ENCODE measurements at regions of chr17 and their contacts with region 1.

Region 1: GRCh38 chr17:48878918-48879898 is 13.4 kb upstream of the ATP5MC1 start:
- DNase-seq: no peak
- H3K4me3 ChIP-seq: no peak overlapping the region
- H3K27me3 ChIP-seq: no peaks in the 10 kb centered on the region
- CTCF ChIP-seq: peak; percentile 95

Region 2: GRCh38 chr17:48671697-48672171 is 207.5 kb before region 1 on chr17:
- CTCF ChIA-PET with region 1: interaction called, 87 read pairs
- POLR2A ChIA-PET with region 1: no interaction called
- DNase-seq: peak; percentile 13
- H3K4me3 ChIP-seq: peak overlapping the region; percentile 28
- H3K27me3 ChIP-seq: peaks cover 7% of the 10 kb centered on the region; the same call in 1 of the 2 replicates
- CTCF ChIP-seq: peak; percentile 92

Region 3: DNA sequence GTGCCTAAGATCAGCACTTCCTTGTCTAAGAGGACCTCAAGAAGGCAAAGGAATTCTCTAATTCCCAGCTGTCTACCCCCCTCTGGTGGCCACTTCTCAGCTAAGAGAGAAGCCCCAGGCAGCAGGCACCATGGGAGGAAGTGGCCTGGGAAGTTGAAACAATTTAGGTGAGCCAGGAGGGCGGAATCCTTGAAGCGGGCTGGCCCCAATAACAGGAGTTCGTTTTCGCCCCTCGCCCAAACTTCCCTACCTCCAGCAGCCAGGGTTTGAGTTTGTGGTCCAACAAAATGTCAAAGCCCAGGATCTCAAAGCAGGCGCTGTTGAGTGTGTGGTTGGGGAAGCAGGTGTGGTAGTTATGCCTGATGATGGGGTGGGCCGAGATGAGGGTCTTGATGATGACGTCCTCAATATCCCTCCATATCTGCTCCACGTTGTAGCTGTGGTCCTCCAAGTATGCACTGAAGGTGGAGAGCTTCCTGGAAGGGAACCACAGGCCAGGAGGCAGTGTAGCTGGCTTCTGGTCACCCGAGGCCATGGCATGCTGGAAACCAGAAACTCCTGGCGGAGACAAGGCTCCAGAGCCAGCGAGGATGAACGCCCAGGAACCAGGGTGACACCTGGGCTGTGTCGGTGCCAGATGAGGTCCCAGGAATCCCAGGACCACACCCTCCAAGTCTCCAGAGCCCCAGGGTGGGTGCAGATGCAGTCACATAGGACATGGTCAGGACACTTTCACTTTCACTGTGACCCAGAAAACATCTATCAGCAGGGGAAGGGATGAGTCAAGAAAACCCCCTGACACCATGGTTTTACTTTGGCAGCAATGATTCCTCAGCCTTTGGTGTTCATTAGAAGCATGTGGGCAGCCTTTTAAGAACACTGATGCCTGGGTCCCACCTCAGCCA is 87.8 kb before region 1 on chr17:
- CTCF ChIA-PET with region 1: interaction called, 34 read pairs
- POLR2A ChIA-PET with region 1: interaction called, 13 read pairs
- DNase-seq: peak; percentile 35
- H3K4me3 ChIP-seq: no peak overlapping the region
- H3K27me3 ChIP-seq: peaks cover 13% of the 10 kb centered on the region
- CTCF ChIP-seq: peak; percentile 89

Region 4: DNA sequence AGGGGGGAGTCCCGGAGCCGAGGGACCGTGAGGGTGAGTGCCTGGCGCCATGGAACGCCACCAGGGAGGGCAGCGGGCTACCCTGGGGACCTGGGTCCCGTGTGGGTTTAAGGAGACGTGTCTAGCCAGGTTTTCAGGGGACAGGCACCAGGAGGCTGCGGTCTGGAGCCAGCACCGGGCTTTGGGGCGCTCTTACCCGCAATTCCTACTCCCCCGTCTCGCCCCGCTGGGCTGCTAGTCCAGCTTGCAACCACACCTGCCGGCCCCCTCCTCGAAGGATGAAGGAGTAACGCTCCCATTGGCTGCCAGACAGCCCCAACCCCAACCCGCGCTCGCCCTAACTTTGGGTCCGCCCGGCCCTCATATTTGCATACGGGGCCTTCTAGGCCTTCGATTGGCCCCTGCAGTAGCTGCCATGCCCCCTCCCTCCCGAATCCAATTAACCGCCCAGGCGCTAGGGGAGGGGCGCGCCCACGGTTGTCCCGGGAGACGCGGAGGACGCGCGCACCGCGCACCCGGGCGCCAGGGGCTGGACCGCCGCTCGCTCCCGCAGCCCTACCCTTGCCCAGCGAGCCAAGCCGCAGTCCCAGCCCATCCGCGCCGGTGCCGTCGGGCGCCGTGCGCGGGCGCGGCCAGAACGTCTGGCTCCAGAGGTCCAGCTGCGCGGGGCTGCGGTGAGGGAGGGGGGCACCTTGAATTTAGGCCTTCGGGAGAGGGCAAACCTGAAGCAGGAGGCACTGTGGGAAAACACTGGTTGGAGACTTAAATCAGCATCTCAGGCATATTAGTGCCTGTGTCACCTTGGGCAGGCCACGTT is 62.2 kb before region 1 on chr17 and contains the start of gene TTLL6:
- CTCF ChIA-PET with region 1: interaction called, 719 read pairs
- POLR2A ChIA-PET with region 1: interaction called, 4 read pairs
- DNase-seq: no peak
- H3K4me3 ChIP-seq: peak within 1 kb of the TSS; percentile 37
- H3K27me3 ChIP-seq: peaks cover 12% of the 10 kb centered on the region
- CTCF ChIP-seq: no peak
- polyA plus RNA-seq, gene TTLL6: 0.02 TPM in 1 of 2 replicates, not detected in the other

Region 5: DNA sequence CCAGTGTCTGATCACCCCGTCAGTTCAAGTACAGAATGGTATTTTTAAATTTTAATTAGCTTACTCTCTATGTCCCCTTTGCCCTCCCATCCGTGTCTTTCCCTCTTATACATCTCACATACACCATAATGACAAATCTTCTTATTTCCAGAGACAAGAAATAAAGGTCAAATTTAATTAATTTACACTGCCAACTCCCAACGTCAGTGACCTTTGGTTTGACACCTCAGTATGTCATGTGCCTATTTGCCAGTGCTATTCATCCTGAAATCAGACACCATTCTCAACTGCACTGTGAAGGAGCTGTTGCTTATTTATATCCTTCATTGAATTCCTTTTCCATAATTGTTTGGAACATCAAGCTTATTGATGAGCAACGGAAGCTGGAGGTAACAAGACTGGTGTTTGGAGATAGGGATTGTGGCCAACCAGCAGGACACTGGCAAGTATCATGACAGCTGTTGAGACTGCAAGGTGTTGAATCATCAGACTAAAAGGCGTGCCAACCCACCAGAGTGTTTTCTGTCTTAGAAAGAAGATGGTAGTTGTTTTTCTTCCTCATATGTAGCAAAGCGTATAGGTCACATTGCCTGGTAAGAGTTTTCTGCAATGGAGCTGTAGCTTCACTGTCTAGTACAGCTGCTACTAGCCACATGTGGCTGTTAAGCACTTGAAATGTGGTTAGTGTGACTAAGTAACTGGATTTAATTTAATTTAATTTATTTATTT is 35.9 kb before region 1 on chr17:
- CTCF ChIA-PET with region 1: interaction called, 19 read pairs
- POLR2A ChIA-PET with region 1: no interaction called
- DNase-seq: no peak
- H3K4me3 ChIP-seq: no peak overlapping the region
- H3K27me3 ChIP-seq: no peaks in the 10 kb centered on the region
- CTCF ChIP-seq: no peak

Region 6: DNA sequence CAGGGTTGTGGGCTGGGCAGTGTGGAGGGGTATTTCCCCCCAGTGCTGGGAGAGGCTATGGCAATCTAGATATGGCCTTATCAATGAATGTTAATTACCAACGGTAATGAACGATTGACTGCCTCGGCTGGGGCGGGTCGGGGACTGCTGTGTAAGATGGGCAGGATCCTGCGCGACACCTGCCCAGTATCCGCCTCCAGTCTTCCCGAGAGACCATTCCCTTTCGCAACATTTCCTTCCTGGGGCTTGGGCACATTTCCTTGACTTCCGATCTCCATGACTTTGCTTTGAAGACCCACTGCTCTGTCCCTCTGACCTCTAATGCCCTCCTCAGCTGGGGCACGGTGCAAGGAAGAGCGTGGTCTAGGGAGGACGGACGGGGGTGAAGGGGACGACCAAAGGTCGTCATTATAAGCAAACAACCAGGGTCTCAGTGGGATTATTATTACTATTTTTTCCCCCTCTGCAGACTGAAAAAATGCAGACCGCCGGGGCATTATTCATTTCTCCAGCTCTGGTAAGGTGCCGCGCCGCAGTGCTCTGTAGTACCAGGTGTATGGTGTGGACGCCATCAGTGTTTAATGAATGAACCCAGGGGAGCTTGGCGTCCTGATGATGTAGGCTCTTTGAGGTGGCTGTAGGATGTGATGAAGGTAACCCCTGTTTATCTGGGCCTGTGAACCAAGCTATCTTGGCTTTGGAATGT is 13.9 kb after region 1 on chr17:
- CTCF ChIA-PET with region 1: interaction called, 16 read pairs
- POLR2A ChIA-PET with region 1: no interaction called
- DNase-seq: no peak
- H3K4me3 ChIP-seq: peak overlapping the region; percentile 98
- H3K27me3 ChIP-seq: no peaks in the 10 kb centered on the region
- CTCF ChIP-seq: no peak

Measured in BJ (cell line).